ENCODE measurements at regions of chr17 and their contacts with region 1.

Region 1: GRCh38 chr17:79796763-79797491 is at the start of gene CBX8:
- DNase-seq: peak; percentile 100
- ATAC-seq: peak; percentile 76
- H3K4me3 ChIP-seq: peak within 1 kb of the TSS; percentile 76
- H3K27ac ChIP-seq: peak within 1 kb of the TSS; percentile 67
- H3K4me1 ChIP-seq: peaks cover 45% of the 10 kb centered on the region
- H3K27me3 ChIP-seq: peaks cover 43% of the 10 kb centered on the region
- CTCF ChIP-seq: no peak
- total RNA-seq, gene CBX8: 11.3 and 12.8 TPM in 2 replicates

Region 2: GRCh38 chr17:79691931-79692330 is 105.0 kb before region 1 on chr17:
- CTCF ChIA-PET with region 1: no interaction called
- POLR2A ChIA-PET with region 1: no interaction called
- intact Hi-C with region 1: no loop called
- DNase-seq: no peak
- ATAC-seq: no peak
- H3K4me3 ChIP-seq: no peak overlapping the region
- H3K27ac ChIP-seq: no peak overlapping the region
- H3K4me1 ChIP-seq: no peaks in the 10 kb centered on the region
- H3K27me3 ChIP-seq: peaks cover 78% of the 10 kb centered on the region
- CTCF ChIP-seq: no peak

Region 3: GRCh38 chr17:79728226-79728907 is 68.6 kb before region 1 on chr17:
- CTCF ChIA-PET with region 1: no interaction called
- POLR2A ChIA-PET with region 1: no interaction called
- intact Hi-C with region 1: no loop called
- DNase-seq: peak; percentile 93
- ATAC-seq: peak; percentile 79
- H3K4me3 ChIP-seq: no peak overlapping the region
- H3K27ac ChIP-seq: no peak overlapping the region
- H3K4me1 ChIP-seq: no peaks in the 10 kb centered on the region
- H3K27me3 ChIP-seq: no peaks in the 10 kb centered on the region
- CTCF ChIP-seq: no peak

Region 4: GRCh38 chr17:79752175-79752574 is 44.8 kb before region 1 on chr17:
- CTCF ChIA-PET with region 1: no interaction called
- POLR2A ChIA-PET with region 1: no interaction called
- intact Hi-C with region 1: loop called (anchors 1 kb)
- DNase-seq: peak; percentile 27
- ATAC-seq: no peak
- H3K4me3 ChIP-seq: no peak overlapping the region
- H3K27ac ChIP-seq: peak overlapping the region; percentile 28
- H3K4me1 ChIP-seq: peaks cover 33% of the 10 kb centered on the region
- H3K27me3 ChIP-seq: 0 out of 2 replicates have a peak, but pooled peaks cover 3% of the 10 kb centered on the region
- CTCF ChIP-seq: no peak

Region 5: GRCh38 chr17:79777894-79778503 is 18.9 kb before region 1 on chr17 and contains the start of gene CBX2:
- CTCF ChIA-PET with region 1: interaction called, 8 read pairs
- POLR2A ChIA-PET with region 1: no interaction called
- intact Hi-C with region 1: loop called (anchors 2 kb)
- DNase-seq: peak; percentile 78
- ATAC-seq: peak; percentile 67
- H3K4me3 ChIP-seq: peak within 1 kb of the TSS; percentile 92
- H3K27ac ChIP-seq: peak within 1 kb of the TSS; percentile 17; the same call in 1 of the 2 replicates
- H3K4me1 ChIP-seq: peaks cover 33% of the 10 kb centered on the region
- H3K27me3 ChIP-seq: no peaks in the 10 kb centered on the region
- CTCF ChIP-seq: no peak
- total RNA-seq, gene CBX2: 39.2 and 43.9 TPM in 2 replicates

Region 6: DNA sequence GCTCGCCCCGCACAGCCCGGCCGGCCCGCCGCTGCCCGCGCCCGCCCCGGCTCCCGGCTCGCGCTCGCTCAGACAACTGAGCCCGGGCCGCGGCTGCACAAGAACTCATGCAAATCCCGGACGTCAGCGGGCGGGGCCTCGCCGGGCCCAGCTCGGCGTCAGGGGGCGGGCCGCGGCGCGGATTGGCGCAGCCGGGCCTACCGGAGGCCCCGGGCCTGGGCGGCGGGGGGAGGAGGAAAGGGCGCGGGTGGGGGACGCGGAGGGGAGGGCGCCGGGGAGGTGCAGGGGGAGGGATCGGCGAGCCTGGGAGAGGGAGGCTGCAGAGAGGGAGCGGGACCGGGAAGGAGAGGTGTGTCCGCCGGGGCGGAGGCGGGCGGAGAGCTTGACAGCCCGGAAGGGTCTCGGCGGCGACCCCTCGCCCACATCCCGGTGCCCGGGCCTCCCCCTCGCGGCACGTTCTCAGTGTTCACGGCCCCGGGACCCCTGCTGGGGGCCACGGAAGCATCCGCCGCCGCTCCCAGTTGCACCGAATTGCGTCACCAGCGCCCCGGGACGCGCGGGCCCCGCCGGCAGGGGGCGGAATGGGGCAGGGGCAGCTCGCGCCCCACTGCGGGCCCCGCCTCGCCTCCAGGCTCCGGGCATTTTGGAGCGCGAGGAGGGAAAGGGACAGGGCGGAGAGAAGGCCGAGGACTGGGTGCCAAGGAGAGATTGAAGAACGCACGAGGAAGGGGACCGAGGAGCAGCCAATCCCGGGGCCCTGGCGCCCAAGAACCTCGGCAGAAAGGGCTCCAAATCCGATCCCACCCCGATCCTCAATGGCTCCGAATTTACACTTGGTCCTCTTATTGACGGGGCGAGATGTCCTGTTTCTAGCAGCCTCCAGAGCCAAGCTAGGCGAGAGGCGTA is 42.7 kb after region 1 on chr17 and contains the start of gene CBX4:
- CTCF ChIA-PET with region 1: interaction called, 15 read pairs
- POLR2A ChIA-PET with region 1: interaction called, 24 read pairs
- intact Hi-C with region 1: loop called (anchors 5 kb)
- DNase-seq: peak; percentile 98
- ATAC-seq: peak; percentile 70
- H3K4me3 ChIP-seq: peak within 1 kb of the TSS; percentile 99
- H3K27ac ChIP-seq: peak within 1 kb of the TSS; percentile 47
- H3K4me1 ChIP-seq: peaks cover 43% of the 10 kb centered on the region
- H3K27me3 ChIP-seq: peaks cover 39% of the 10 kb centered on the region
- CTCF ChIP-seq: peak; percentile 92
- total RNA-seq, gene CBX4: 53.5 and 75.4 TPM in 2 replicates

Region 7: GRCh38 chr17:79844869-79845600 is 48.1 kb after region 1 on chr17:
- CTCF ChIA-PET with region 1: interaction called, 12 read pairs
- POLR2A ChIA-PET with region 1: no interaction called
- intact Hi-C with region 1: loop called (anchors 5 kb)
- DNase-seq: peak; percentile 63
- ATAC-seq: peak; percentile 55
- H3K4me3 ChIP-seq: peak overlapping the region; percentile 82
- H3K27ac ChIP-seq: no peak overlapping the region
- H3K4me1 ChIP-seq: peaks cover 28% of the 10 kb centered on the region
- H3K27me3 ChIP-seq: peaks cover 38% of the 10 kb centered on the region
- CTCF ChIP-seq: peak; percentile 72